ENCODE measurements at regions of chr2 and their contacts with region 1.

Region 1: DNA sequence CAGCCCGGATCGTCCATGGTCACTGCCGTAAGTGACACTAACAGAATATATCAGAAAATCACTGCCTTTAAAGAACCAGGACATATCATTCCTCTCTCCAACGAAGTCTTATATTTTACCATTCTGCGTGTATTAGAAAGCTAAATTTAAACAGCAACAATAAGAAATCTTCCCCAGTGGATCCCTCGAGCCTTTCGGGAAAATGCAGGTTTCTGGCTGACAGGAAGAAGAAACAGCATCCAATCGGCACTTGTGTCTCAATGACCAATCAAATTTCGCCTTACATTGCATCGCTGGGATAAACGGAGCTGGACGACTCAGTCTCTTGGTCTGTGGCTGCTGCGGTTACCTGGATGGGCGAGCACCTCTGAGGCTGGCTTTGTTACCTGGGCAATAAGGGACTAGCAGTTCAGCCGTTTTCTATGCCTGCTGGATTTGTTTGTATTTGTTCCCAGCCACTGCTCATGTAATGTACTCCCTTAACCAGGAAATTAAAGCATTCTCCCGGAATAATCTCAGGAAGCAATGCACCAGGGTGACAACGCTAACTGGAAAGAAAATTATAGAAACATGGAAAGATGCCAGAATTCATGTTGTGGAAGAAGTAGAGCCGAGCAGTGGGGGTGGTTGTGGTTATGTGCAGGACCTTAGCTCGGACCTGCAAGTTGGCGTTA is at the start of gene DUSP19:
- DNase-seq: peak; percentile 71
- ATAC-seq: peak; percentile 95 to 96
- total RNA-seq, gene DUSP19: 5.9 to 10.5 TPM

Region 2: GRCh38 chr2:183038341-183039300 is 40.0 kb before region 1 on chr2 and contains the start of gene NCKAP1:
- intact Hi-C with region 1: loop called in 1 of 2 experiments (anchors 2 kb)
- DNase-seq: peak; percentile 93
- ATAC-seq: peak; percentile 92 to 93
- total RNA-seq, gene NCKAP1: 104 to 132 TPM

Region 3: GRCh38 chr2:183063083-183063482 is 15.5 kb before region 1 on chr2:
- intact Hi-C with region 1: no loop called
- DNase-seq: no peak
- ATAC-seq: no peak

Region 4: GRCh38 chr2:183124222-183124956 is 45.8 kb after region 1 on chr2 and contains the start of gene NUP35:
- intact Hi-C with region 1: loop called in 1 of 2 experiments (anchors 5 kb)
- DNase-seq: peak; percentile 84
- ATAC-seq: peak; percentile 99
- total RNA-seq, gene NUP35: 8.5 to 9.7 TPM

Region 5: DNA sequence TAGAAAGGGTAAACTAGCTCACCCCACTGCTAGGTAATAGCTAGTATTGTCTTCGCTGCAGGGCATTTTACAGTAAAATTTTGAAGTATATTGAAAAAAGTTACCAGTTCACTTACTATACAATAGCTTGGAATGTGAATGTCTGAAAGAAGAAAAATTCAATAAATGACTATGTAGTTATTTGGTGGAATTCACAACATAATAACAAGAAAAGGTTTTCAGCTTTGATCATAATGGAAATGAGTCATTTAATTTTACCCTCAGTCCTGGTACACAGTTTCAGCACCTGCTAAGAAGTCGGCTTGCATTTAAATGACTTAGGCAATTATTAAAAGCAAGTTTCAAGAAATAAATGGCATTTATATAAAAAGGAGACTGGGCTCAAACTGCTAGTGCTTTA is 136.1 kb after region 1 on chr2:
- intact Hi-C with region 1: no loop called
- DNase-seq: no peak
- ATAC-seq: no peak

Region 6: GRCh38 chr2:183967756-183968155 is 889.2 kb after region 1 on chr2:
- intact Hi-C with region 1: no loop called
- DNase-seq: no peak
- ATAC-seq: no peak